OCI-LY7 (cell line): ENCODE measurements at regions of chrX and their contacts with region 1.

Region 1: GRCh38 chrX:48021026-48021900 is 14.5 kb downstream of the SPACA5 start:
- DNase-seq: peak; percentile 83
- H3K4me3 ChIP-seq: peak overlapping the region; percentile 75
- H3K27ac ChIP-seq: peak overlapping the region; percentile 60
- H3K4me1 ChIP-seq: no peaks in the 10 kb centered on the region
- CTCF ChIP-seq: no peak

Region 2: GRCh38 chrX:47560831-47561652 is 460.2 kb before region 1 on chrX and contains the start of gene ARAF:
- CTCF ChIA-PET with region 1: no interaction called
- POLR2A ChIA-PET with region 1: no interaction called
- intact Hi-C with region 1: loop called (anchors 2 kb)
- DNase-seq: peak; percentile 98
- H3K4me3 ChIP-seq: peak within 1 kb of the TSS; percentile 86
- H3K27ac ChIP-seq: peak within 1 kb of the TSS; percentile 70
- H3K4me1 ChIP-seq: peaks cover 31% of the 10 kb centered on the region
- CTCF ChIP-seq: no peak
- total RNA-seq, gene ARAF: 13.2 and 28.9 TPM in 2 replicates

Region 3: DNA sequence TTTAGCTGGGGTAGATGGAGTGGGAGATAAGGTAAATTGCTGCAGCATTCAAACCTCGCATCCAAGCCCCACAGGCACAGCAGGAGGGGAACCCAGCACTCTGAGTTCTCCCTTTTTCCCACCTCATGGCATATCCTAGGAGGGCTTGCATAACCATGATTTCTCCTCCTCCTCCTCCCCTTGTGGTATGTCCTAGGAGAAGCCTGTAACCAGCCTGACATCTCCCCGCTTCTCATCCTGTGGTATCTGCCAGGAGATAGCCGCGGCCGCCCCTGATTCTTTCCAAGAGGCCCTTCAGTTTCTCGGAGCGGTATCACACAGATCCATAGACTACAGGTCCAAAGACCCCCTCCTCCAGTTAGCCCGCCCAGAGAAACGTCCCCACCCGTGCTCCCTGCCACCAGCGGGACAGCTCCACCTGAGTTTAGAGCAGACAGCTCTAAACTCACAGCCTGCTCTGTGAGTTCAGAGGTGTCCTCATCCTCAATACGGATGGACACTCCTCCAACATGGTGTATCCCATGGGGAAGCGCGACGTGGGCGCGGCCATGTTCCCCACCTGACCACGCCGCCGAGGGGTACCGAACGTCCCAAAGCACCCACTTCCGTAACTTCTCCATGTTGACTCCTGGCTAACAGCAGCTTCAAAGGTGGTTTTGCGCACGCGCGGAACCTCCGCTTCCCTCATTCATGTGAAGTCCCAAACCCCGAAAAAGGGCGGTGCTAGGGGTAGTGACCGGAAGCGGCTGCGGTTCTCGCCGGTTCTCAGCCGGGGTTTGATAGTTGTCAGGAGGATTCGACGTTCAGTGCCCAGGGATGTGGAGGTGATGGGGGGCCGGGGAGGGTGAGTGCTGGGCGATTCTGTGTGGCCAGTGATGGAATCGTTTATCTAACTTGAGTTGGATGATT is 184.8 kb before region 1 on chrX and contains the start of gene ZNF81:
- CTCF ChIA-PET with region 1: no interaction called
- POLR2A ChIA-PET with region 1: interaction called, 4 read pairs
- intact Hi-C with region 1: loop called (anchors 1 kb)
- DNase-seq: peak; percentile 95
- H3K4me3 ChIP-seq: peak within 1 kb of the TSS; percentile 90
- H3K27ac ChIP-seq: peak within 1 kb of the TSS; percentile 38
- H3K4me1 ChIP-seq: peaks cover 17% of the 10 kb centered on the region
- CTCF ChIP-seq: no peak
- total RNA-seq, gene ZNF81: 4.9 and 7.1 TPM in 2 replicates

Region 4: GRCh38 chrX:47915886-47916493 is 105.3 kb before region 1 on chrX:
- CTCF ChIA-PET with region 1: no interaction called
- POLR2A ChIA-PET with region 1: no interaction called
- intact Hi-C with region 1: no loop called
- DNase-seq: no peak
- H3K4me3 ChIP-seq: no peak overlapping the region
- H3K27ac ChIP-seq: no peak overlapping the region
- H3K4me1 ChIP-seq: no peaks in the 10 kb centered on the region
- CTCF ChIP-seq: no peak

Region 5: DNA sequence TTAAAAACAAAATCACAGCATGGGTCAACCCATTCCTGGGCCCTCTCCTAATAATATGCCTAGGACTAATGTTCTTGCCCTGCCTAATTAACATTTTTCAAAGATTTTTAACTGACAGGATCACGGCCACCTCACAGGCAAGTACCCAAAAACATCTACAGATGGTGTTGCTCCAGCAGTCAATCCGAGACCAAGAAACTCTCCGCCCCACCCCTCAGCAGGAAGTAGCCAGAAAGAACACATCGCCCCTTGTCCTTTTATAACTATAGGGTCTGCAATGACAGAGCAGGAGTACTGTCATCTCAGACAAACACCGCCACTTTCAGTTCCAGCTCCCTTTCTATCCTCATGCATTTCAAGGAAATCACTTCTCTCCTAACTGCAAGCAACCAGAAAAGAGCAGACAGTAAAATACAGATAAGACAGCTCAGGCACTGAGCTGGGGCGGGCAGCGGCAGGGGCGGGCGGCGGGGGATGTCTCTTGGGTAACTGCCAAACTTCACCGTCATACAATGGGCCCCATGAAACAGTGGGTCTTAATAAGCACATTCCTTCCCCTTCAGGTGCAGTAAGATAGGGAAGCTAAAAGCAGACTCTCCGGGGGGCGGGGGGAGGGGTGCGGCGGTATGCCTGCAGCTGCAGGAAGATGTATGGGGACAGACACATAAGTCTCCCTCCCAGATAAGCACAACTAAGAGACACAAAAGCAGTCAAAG is 84.9 kb before region 1 on chrX:
- CTCF ChIA-PET with region 1: no interaction called
- POLR2A ChIA-PET with region 1: interaction called, 3 read pairs
- intact Hi-C with region 1: loop called (anchors 2 kb)
- DNase-seq: peak; percentile 85
- H3K4me3 ChIP-seq: peak overlapping the region; percentile 64
- H3K27ac ChIP-seq: peak overlapping the region; percentile 98
- H3K4me1 ChIP-seq: peaks cover 31% of the 10 kb centered on the region
- CTCF ChIP-seq: 0 out of 2 replicates have a peak, but pooled peaks have one; percentile 18